Breast epithelium (tissue), 4 donors: ENCODE measurements at regions of chr3 and their contacts with region 1.

Region 1: GRCh38 chr3:175200391-175201095 is 341.4 kb downstream of the NAALADL2 start:
- DNase-seq: no peak
- H3K4me3 ChIP-seq: no peak overlapping the region
- H3K27ac ChIP-seq: no peak overlapping the region
- H3K4me1 ChIP-seq: no peaks in the 10 kb centered on the region
- H3K27me3 ChIP-seq: no peaks in the 10 kb centered on the region
- CTCF ChIP-seq: no peak
- POLR2A ChIP-seq: no peak

Region 2: GRCh38 chr3:175124166-175124565 is 76.4 kb before region 1 on chr3:
- intact Hi-C with region 1: loop called (anchors 2 kb)
- DNase-seq: no peak
- H3K4me3 ChIP-seq: no peak overlapping the region
- H3K27ac ChIP-seq: no peak overlapping the region
- H3K4me1 ChIP-seq: no peaks in the 10 kb centered on the region
- H3K27me3 ChIP-seq: no peaks in the 10 kb centered on the region
- CTCF ChIP-seq: no peak
- POLR2A ChIP-seq: no peak